PC-9 (cell line): ENCODE measurements at regions of chr3 and their contacts with region 1.

Region 1: GRCh38 chr3:160810362-160811236 is 54.6 kb downstream of the PPM1L start:
- DNase-seq: no peak
- H3K4me3 ChIP-seq: no peak overlapping the region
- H3K27ac ChIP-seq: no peak overlapping the region
- H3K4me1 ChIP-seq: no peaks in the 10 kb centered on the region
- H3K27me3 ChIP-seq: no peaks in the 10 kb centered on the region
- CTCF ChIP-seq: no peak

Region 2: GRCh38 chr3:160771811-160772459 is 38.7 kb before region 1 on chr3:
- CTCF ChIA-PET with region 1: interaction called, 11 read pairs
- POLR2A ChIA-PET with region 1: no interaction called
- intact Hi-C with region 1: no loop called
- DNase-seq: no peak
- H3K4me3 ChIP-seq: no peak overlapping the region
- H3K27ac ChIP-seq: no peak overlapping the region
- H3K4me1 ChIP-seq: no peaks in the 10 kb centered on the region
- H3K27me3 ChIP-seq: no peaks in the 10 kb centered on the region
- CTCF ChIP-seq: no peak